Activated B cell treated with CpG ODN at 0.5 μM for 24 hours (primary cell): ENCODE measurements at regions of chr16 and their contacts with region 1.

Region 1: GRCh38 chr16:2752035-2752849 is at the start of gene SRRM2:
- DNase-seq: peak; percentile 94
- ATAC-seq: peak; percentile 85
- H3K4me3 Mint-ChIP-seq: peak within 1 kb of the TSS; percentile 90
- H3K27ac Mint-ChIP-seq: peak within 1 kb of the TSS; percentile 98
- H3K4me1 Mint-ChIP-seq: peaks cover 52% of the 10 kb centered on the region
- H3K27me3 Mint-ChIP-seq: no peaks in the 10 kb centered on the region
- CTCF ChIP-seq: no peak
- total RNA-seq, gene SRRM2: 891 and 963 TPM in 2 replicates

Region 2: GRCh38 chr16:2267913-2268666 is 484.2 kb before region 1 on chr16 and contains the start of gene RNPS1:
- CTCF ChIA-PET with region 1: no interaction called
- POLR2A ChIA-PET with region 1: no interaction called
- intact Hi-C with region 1: loop called (anchors 5 kb)
- DNase-seq: peak; percentile 98
- ATAC-seq: peak; percentile 91
- H3K4me3 Mint-ChIP-seq: peak within 1 kb of the TSS; percentile 93
- H3K27ac Mint-ChIP-seq: peak within 1 kb of the TSS; percentile 98
- H3K4me1 Mint-ChIP-seq: peaks cover 43% of the 10 kb centered on the region
- H3K27me3 Mint-ChIP-seq: no peaks in the 10 kb centered on the region
- CTCF ChIP-seq: no peak
- total RNA-seq, gene RNPS1: 228 and 232 TPM in 2 replicates

Region 3: GRCh38 chr16:2682209-2683021 is 69.8 kb before region 1 on chr16 and contains the start of gene KCTD5:
- CTCF ChIA-PET with region 1: no interaction called
- POLR2A ChIA-PET with region 1: interaction called, 8 read pairs
- intact Hi-C with region 1: loop called (anchors 2 kb)
- DNase-seq: peak; percentile 93
- ATAC-seq: peak; percentile 85
- H3K4me3 Mint-ChIP-seq: peak within 1 kb of the TSS; percentile 96
- H3K27ac Mint-ChIP-seq: peak within 1 kb of the TSS; percentile 92
- H3K4me1 Mint-ChIP-seq: peaks cover 31% of the 10 kb centered on the region
- H3K27me3 Mint-ChIP-seq: no peaks in the 10 kb centered on the region
- CTCF ChIP-seq: no peak
- total RNA-seq, gene KCTD5: 30.3 and 31.4 TPM in 2 replicates

Region 4: GRCh38 chr16:2720719-2721633 is 31.3 kb before region 1 on chr16:
- CTCF ChIA-PET with region 1: no interaction called
- POLR2A ChIA-PET with region 1: no interaction called
- intact Hi-C with region 1: loop called (anchors 1 kb)
- DNase-seq: peak; percentile 87
- ATAC-seq: peak; percentile 93
- H3K4me3 Mint-ChIP-seq: peak overlapping the region; percentile 81
- H3K27ac Mint-ChIP-seq: peak overlapping the region; percentile 53
- H3K4me1 Mint-ChIP-seq: peaks cover 5% of the 10 kb centered on the region
- H3K27me3 Mint-ChIP-seq: peaks cover 11% of the 10 kb centered on the region
- CTCF ChIP-seq: no peak

Region 5: DNA sequence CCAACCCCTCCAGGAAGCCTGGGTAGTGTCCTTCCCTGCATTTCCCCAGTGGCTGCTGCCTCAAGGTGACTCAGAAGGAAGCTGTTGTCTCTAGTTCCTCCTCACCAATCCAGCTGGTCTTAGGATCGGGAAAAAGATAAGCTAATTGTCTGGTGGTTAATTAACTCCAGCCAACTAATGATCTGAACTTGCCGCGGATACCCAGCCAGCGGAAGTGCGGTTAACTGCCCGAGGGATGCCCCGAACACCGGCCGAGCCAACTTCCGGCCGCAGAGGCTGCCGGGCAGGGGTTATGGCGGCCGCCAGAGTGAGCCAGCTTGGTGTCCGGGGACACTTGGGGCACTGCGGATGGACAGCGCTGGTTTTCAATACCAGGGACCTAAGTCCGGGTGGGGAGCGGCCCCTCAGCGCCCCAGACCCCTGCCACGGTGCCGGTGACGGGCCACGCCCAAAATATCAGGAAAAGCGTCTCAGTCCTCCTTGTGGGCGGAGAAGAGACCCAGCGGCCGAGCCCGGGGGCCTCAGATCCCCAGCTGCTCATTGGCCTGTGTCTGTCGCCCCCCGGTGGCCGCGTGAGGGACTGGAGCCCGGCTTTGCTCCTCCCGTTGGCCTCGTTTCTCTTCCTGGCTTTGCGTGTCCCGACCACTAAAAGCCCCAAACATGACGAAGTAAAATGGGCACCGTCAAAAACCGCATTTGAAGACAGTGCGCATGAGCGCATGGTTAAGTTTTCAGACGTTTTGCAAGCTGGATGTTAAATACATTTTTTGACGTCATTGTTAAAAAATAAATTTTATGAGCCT is 115.9 kb after region 1 on chr16:
- CTCF ChIA-PET with region 1: no interaction called
- POLR2A ChIA-PET with region 1: interaction called, 4 read pairs
- intact Hi-C with region 1: loop called (anchors 1 kb)
- DNase-seq: peak; percentile 92
- ATAC-seq: peak; percentile 96
- H3K4me3 Mint-ChIP-seq: peak overlapping the region; percentile 93
- H3K27ac Mint-ChIP-seq: peak overlapping the region; percentile 92
- H3K4me1 Mint-ChIP-seq: peaks cover 7% of the 10 kb centered on the region
- H3K27me3 Mint-ChIP-seq: peaks cover 11% of the 10 kb centered on the region
- CTCF ChIP-seq: peak; percentile 31